CD8-positive, alpha-beta T cell (primary cell): ENCODE measurements at regions of chr18 and their contacts with region 1.

Region 1: DNA sequence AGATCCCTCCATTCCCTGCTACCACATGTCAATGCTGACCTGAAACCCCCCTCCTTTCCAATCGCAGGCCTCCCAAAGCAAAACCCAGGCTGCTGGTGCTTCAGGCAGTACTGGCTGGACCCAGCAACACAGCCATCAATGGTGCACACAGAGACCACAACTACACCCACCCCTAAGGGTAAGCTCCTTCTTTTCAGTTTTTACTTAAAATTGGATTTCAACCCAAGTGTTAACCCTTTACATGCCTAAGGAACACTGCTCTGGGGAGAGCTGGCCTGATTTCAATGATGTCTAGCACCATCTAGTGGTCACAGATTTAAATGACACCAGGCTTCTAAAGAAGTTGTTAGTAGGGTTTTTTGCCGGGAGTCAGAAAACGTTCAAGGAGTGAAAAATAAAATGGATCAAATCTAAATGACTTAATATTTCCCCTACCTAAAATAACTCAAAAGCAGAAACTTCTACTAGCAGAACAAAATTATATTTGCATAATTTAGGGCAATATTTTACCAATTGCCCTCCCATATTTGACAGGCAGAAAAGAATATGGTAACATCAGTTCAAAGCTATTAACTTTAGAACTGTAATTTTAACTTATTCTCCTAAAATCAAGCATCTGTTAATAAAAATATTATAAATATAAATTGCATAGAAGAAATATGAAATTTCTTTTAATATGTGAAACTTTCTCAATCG is 24.6 kb downstream of the FECH start:
- DNase-seq: peak in 3 of 9 experiments; percentile 25 to 67 (median 58)
- ATAC-seq: peak; percentile 44
- H3K4me3 ChIP-seq: no peak overlapping the region
- H3K4me3 Mint-ChIP-seq: no peak overlapping the region
- H3K27ac ChIP-seq: no peak overlapping the region
- H3K27ac Mint-ChIP-seq: no peak overlapping the region
- H3K4me1 ChIP-seq: no peaks in the 10 kb centered on the region
- H3K4me1 Mint-ChIP-seq: peaks cover 4% of the 10 kb centered on the region
- H3K27me3 ChIP-seq: no peaks in the 10 kb centered on the region
- H3K27me3 Mint-ChIP-seq: no peaks in the 10 kb centered on the region
- CTCF ChIP-seq: peak; percentile 94

Region 2: DNA sequence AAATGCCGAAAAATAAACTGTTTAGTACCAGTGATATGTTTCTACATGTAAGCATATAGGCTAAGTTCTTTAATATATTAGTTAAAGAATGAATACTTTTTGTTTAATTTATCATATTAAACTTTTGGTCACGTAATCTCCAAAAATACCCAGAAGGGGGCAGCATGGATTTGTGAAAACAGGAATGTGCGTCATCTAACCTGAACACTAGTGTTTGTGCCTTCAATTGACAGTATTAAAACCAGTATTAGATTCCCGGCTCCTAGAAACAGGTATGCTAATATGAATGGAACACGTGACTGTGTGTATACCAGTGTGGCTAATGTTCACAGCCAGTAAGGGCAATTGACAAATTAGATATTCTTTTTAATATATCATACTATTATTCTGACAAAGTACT is 858.9 kb before region 1 on chr18:
- CTCF ChIA-PET with region 1: interaction called, 4 read pairs
- POLR2A ChIA-PET with region 1: no interaction called
- intact Hi-C with region 1: loop called (anchors 2 to 5 kb)
- DNase-seq: peak in 5 of 9 experiments; percentile 1 to 48 (median 28)
- ATAC-seq: no peak
- H3K4me3 ChIP-seq: no peak overlapping the region
- H3K4me3 Mint-ChIP-seq: no peak overlapping the region
- H3K27ac ChIP-seq: no peak overlapping the region
- H3K27ac Mint-ChIP-seq: no peak overlapping the region
- H3K4me1 ChIP-seq: no peaks in the 10 kb centered on the region
- H3K4me1 Mint-ChIP-seq: peaks cover 2% of the 10 kb centered on the region
- H3K27me3 ChIP-seq: no peaks in the 10 kb centered on the region
- H3K27me3 Mint-ChIP-seq: no peaks in the 10 kb centered on the region
- CTCF ChIP-seq: peak; percentile 61

Region 3: GRCh38 chr18:56748698-56749268 is 813.1 kb before region 1 on chr18:
- CTCF ChIA-PET with region 1: interaction called, 4 read pairs
- POLR2A ChIA-PET with region 1: no interaction called
- intact Hi-C with region 1: loop called (anchors 1 kb)
- DNase-seq: peak in 2 of 9 experiments; percentile 32 to 44
- ATAC-seq: no peak
- H3K4me3 ChIP-seq: no peak overlapping the region
- H3K4me3 Mint-ChIP-seq: no peak overlapping the region
- H3K27ac ChIP-seq: no peak overlapping the region
- H3K27ac Mint-ChIP-seq: no peak overlapping the region
- H3K4me1 ChIP-seq: peaks cover 7% of the 10 kb centered on the region
- H3K4me1 Mint-ChIP-seq: peaks cover 24% of the 10 kb centered on the region
- H3K27me3 ChIP-seq: no peaks in the 10 kb centered on the region
- H3K27me3 Mint-ChIP-seq: no peaks in the 10 kb centered on the region
- CTCF ChIP-seq: peak; percentile 67

Region 4: DNA sequence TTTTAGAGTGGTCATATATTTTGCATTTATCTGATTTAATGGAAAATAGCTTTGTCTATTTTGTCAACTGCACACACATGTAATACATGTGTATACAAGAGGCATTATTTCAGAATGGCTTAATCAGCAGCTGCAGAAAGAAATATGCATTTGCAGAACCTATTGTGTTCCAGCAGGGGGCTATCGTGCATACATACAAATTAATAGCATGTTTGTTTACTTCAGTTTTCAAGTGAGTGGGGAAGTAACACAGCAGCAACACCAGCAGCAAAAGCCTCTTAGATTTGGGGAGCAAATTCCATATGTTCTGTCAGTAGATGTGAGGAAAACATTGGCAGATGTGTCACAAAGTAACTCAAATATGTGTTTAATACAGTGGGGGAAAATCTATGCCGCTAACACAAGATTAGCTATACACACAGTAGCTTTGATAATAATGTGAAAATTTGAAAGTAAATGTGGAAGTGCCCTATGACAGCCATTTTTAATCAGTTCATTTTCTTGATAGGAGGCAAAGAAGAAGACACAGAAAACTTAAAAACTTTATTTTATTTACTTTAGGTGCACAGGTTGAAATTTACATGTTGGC is 692.6 kb before region 1 on chr18:
- CTCF ChIA-PET with region 1: interaction called, 3 read pairs
- POLR2A ChIA-PET with region 1: no interaction called
- intact Hi-C with region 1: loop called (anchors 1 to 5 kb)
- DNase-seq: peak in 2 of 9 experiments; percentile 31 to 47
- ATAC-seq: peak; percentile 51
- H3K4me3 ChIP-seq: no peak overlapping the region
- H3K4me3 Mint-ChIP-seq: no peak overlapping the region
- H3K27ac ChIP-seq: no peak overlapping the region
- H3K27ac Mint-ChIP-seq: no peak overlapping the region
- H3K4me1 ChIP-seq: peaks cover 16% of the 10 kb centered on the region
- H3K4me1 Mint-ChIP-seq: peaks cover 18% of the 10 kb centered on the region
- H3K27me3 ChIP-seq: no peaks in the 10 kb centered on the region
- H3K27me3 Mint-ChIP-seq: no peaks in the 10 kb centered on the region
- CTCF ChIP-seq: peak; percentile 59

Region 5: DNA sequence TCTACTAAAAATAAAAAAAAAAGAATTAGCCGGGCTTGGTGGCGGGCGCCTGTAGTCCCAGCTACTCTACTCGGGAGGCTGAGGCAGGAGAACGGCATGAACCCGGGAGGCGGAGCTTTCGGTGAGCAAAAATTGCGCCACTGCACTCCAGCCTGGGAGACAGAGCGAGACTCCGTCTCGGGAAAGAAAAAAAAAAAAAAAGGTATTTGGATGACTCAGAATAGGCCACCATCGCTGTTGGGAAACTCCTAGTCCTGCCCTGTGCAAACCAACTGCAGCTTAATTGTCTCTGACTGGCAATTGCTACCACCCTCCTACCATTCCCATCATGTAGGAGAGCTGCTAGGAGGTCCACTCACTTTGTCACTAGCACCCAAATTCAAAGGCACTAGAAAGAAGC is 197.8 kb after region 1 on chr18:
- CTCF ChIA-PET with region 1: no interaction called
- POLR2A ChIA-PET with region 1: no interaction called
- intact Hi-C with region 1: no loop called
- DNase-seq: no peak
- ATAC-seq: no peak
- H3K4me3 ChIP-seq: no peak overlapping the region
- H3K4me3 Mint-ChIP-seq: no peak overlapping the region
- H3K27ac ChIP-seq: no peak overlapping the region
- H3K27ac Mint-ChIP-seq: no peak overlapping the region
- H3K4me1 ChIP-seq: no peaks in the 10 kb centered on the region
- H3K4me1 Mint-ChIP-seq: no peaks in the 10 kb centered on the region
- H3K27me3 ChIP-seq: no peaks in the 10 kb centered on the region
- H3K27me3 Mint-ChIP-seq: no peaks in the 10 kb centered on the region
- CTCF ChIP-seq: no peak

Region 6: DNA sequence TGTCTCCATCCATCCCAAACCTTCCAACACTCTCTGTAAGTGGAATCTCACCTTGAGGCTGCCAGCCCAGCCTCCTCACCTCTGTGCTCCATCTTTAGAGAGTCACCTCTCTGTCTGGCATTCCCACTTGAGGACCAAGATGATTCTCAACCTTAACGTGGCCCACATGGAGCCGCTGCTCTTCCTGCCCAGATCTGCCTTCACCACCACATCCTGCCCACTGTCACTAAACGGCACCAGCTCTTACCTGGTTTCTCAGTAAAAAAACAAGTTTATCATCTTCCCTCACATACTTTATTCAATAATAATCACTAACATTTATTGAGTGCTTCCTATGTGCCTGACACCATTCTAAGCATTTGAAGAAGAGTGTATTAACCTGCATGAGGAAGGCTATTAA is 562.6 kb after region 1 on chr18:
- CTCF ChIA-PET with region 1: no interaction called
- POLR2A ChIA-PET with region 1: no interaction called
- intact Hi-C with region 1: loop called in 1 of 2 experiments (anchors 5 kb)
- DNase-seq: peak in 1 of 9 experiments; percentile 18
- ATAC-seq: no peak
- H3K4me3 ChIP-seq: no peak overlapping the region
- H3K4me3 Mint-ChIP-seq: no peak overlapping the region
- H3K27ac ChIP-seq: no peak overlapping the region
- H3K27ac Mint-ChIP-seq: no peak overlapping the region
- H3K4me1 ChIP-seq: peaks cover 5% of the 10 kb centered on the region
- H3K4me1 Mint-ChIP-seq: peaks cover 8% of the 10 kb centered on the region
- H3K27me3 ChIP-seq: no peaks in the 10 kb centered on the region
- H3K27me3 Mint-ChIP-seq: peaks cover 4% of the 10 kb centered on the region
- CTCF ChIP-seq: no peak

Region 7: GRCh38 chr18:58161659-58162058 is 599.8 kb after region 1 on chr18:
- CTCF ChIA-PET with region 1: no interaction called
- POLR2A ChIA-PET with region 1: no interaction called
- intact Hi-C with region 1: no loop called
- DNase-seq: no peak
- ATAC-seq: no peak
- H3K4me3 ChIP-seq: no peak overlapping the region
- H3K4me3 Mint-ChIP-seq: no peak overlapping the region
- H3K27ac ChIP-seq: no peak overlapping the region
- H3K27ac Mint-ChIP-seq: no peak overlapping the region
- H3K4me1 ChIP-seq: no peaks in the 10 kb centered on the region
- H3K4me1 Mint-ChIP-seq: no peaks in the 10 kb centered on the region
- H3K27me3 ChIP-seq: no peaks in the 10 kb centered on the region
- H3K27me3 Mint-ChIP-seq: peaks cover 6% of the 10 kb centered on the region
- CTCF ChIP-seq: no peak